Activated B cell treated with CpG ODN at 0.5 μM for 24 hours (primary cell): ENCODE measurements at regions of chr12 and their contacts with region 1.

Region 1: DNA sequence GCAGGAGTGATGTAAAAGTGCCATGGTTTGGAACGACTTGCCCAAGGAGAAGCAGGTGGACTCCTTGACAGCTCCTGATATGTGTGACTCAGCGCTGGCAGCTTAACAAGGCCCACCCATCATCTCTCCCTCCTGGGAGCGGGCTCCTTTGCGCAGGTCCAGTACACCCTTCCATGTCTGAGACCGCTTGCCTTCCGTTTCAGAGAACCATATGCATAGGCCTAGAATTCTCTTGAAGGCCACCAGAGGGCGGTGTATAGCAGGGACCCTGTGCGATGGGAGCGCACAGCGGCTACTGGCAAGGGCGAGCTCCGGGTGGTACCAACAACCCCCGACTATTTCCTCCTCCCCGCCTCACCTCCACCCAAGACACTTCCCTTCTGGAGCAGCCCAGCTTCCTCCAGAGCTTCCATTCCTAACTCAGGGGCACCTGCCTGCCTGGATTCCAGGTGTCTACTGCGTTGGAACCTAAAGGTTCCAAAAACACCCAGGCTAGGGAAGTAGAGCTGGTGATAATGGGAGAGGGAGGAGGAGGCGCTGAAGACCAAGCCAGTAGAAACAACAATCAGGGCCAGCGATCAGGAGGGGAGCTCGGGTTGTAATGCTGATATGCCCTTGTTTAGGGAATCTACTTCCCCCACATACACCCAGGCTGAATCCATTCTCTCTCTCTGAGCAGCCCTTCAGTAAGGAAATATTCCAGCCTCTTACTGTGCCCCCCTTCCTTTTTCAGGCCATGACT is 6.2 kb downstream of the DHH start:
- DNase-seq: peak; percentile 53
- ATAC-seq: peak; percentile 93
- H3K4me3 Mint-ChIP-seq: peak overlapping the region; percentile 64
- H3K27ac Mint-ChIP-seq: no peak overlapping the region
- H3K4me1 Mint-ChIP-seq: peaks cover 42% of the 10 kb centered on the region
- H3K27me3 Mint-ChIP-seq: peaks cover 45% of the 10 kb centered on the region
- CTCF ChIP-seq: peak; percentile 35

Region 2: DNA sequence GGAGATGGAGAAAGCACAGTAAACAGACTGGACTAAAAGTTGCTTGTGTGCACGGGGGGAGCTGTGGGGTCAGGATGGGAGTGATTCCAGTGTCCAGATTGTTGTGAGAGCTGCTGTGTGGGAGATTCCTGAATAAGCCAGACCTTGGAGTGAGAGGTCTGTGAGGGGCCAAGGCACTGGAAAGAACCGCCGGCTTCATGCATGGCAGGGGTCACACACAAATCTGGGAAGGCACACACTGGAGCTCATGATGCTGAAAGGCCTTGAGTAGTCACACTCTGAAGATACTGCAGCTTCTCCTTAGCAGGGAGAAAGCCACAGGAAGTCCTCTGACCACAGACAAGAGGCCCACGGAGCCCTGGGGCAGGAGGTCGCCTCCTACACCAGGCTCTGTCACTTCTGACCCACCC is 322.6 kb before region 1 on chr12:
- CTCF ChIA-PET with region 1: no interaction called
- POLR2A ChIA-PET with region 1: no interaction called
- intact Hi-C with region 1: no loop called
- DNase-seq: no peak
- ATAC-seq: no peak
- H3K4me3 Mint-ChIP-seq: no peak overlapping the region
- H3K27ac Mint-ChIP-seq: no peak overlapping the region
- H3K4me1 Mint-ChIP-seq: peaks cover 20% of the 10 kb centered on the region
- H3K27me3 Mint-ChIP-seq: peaks cover 10% of the 10 kb centered on the region
- CTCF ChIP-seq: no peak

Region 3: GRCh38 chr12:48977315-48978281 is 110.8 kb before region 1 on chr12:
- CTCF ChIA-PET with region 1: no interaction called
- POLR2A ChIA-PET with region 1: no interaction called
- intact Hi-C with region 1: loop called (anchors 5 kb)
- DNase-seq: peak; percentile 79
- ATAC-seq: peak; percentile 72
- H3K4me3 Mint-ChIP-seq: peak overlapping the region; percentile 68
- H3K27ac Mint-ChIP-seq: peak overlapping the region; percentile 64
- H3K4me1 Mint-ChIP-seq: peaks cover 42% of the 10 kb centered on the region
- H3K27me3 Mint-ChIP-seq: peaks cover 50% of the 10 kb centered on the region
- CTCF ChIP-seq: peak; percentile 45

Region 4: DNA sequence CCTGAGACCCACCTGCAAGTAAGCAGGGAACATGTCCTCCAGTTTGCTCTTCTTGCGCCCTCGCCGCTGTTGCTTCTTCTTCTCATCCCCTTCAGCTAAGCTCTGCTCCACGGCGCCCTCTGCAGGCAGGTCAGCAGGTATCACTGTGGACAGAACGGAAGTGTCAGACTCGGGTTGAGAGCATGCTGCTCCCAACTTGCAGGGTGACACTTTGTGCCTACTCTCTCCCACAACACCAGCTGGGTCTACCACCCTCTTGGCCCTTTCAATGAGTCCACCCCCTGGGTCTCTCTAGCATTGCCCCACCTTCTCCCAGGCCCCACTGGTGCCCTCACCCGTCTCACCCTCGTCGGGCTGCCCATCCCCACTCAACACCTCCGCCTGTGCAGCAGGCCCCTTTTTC is 44.5 kb before region 1 on chr12:
- CTCF ChIA-PET with region 1: no interaction called
- POLR2A ChIA-PET with region 1: no interaction called
- intact Hi-C with region 1: no loop called
- DNase-seq: peak; percentile 63
- ATAC-seq: peak; percentile 81
- H3K4me3 Mint-ChIP-seq: no peak overlapping the region
- H3K27ac Mint-ChIP-seq: no peak overlapping the region
- H3K4me1 Mint-ChIP-seq: no peaks in the 10 kb centered on the region
- H3K27me3 Mint-ChIP-seq: no peaks in the 10 kb centered on the region
- CTCF ChIP-seq: no peak

Region 5: GRCh38 chr12:49060237-49061156 is 27.9 kb before region 1 on chr12 and contains the start of gene KMT2D:
- CTCF ChIA-PET with region 1: interaction called, 79 read pairs
- POLR2A ChIA-PET with region 1: interaction called, 7 read pairs
- intact Hi-C with region 1: loop called (anchors 1 kb)
- DNase-seq: peak; percentile 83
- ATAC-seq: peak; percentile 67
- H3K4me3 Mint-ChIP-seq: peak within 1 kb of the TSS; percentile 97
- H3K27ac Mint-ChIP-seq: peak within 1 kb of the TSS; percentile 97
- H3K4me1 Mint-ChIP-seq: peaks cover 50% of the 10 kb centered on the region
- H3K27me3 Mint-ChIP-seq: no peaks in the 10 kb centered on the region
- CTCF ChIP-seq: no peak
- total RNA-seq, gene KMT2D: 127 and 136 TPM in 2 replicates

Region 6: DNA sequence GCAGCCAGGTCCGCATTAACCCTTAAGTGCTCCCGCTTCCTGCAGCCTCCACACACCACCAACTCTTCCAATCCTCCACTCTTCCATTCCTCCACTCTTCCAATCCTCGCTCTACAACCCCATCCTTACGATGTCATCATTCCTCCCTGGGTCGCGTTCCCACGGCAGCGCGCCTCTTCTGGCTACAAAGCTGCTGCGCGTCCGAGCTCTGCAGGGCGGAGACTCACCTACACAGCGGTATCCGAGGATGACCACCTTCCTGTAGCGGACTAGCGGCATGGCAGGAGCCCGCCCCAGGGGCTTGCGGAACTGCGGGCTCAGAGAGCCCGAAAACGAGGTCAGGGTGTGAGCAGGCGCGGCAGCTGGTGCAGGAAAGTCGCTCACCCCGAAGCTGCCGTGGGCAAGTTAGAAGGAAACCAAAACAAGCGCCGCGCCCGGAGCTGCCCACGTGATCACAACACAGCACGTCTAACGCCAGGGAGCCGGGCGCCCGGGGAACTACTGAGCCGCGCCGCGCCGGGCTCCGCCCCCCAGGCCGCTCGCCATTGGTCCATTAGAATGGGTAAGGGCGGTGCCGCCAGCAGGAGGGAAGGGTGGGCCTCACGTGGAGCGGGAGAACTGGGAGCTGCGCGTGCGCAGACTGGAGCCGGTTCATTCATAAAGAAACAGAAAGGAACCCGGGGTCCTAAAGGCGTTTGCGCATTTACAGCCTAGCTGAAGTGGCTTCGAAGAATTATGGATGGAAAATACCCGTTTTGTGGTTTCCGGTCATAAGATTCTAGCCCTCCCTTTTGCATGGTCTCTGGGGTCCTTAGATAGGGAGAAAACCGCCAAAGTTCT is 18.6 kb before region 1 on chr12 and contains the start of gene RHEBL1:
- CTCF ChIA-PET with region 1: interaction called, 79 read pairs
- POLR2A ChIA-PET with region 1: interaction called, 9 read pairs
- intact Hi-C with region 1: loop called (anchors 1 kb)
- DNase-seq: peak; percentile 98
- ATAC-seq: peak; percentile 100
- H3K4me3 Mint-ChIP-seq: peak within 1 kb of the TSS; percentile 99
- H3K27ac Mint-ChIP-seq: peak within 1 kb of the TSS; percentile 93
- H3K4me1 Mint-ChIP-seq: peaks cover 15% of the 10 kb centered on the region
- H3K27me3 Mint-ChIP-seq: no peaks in the 10 kb centered on the region
- CTCF ChIP-seq: no peak
- total RNA-seq, gene RHEBL1: 3.2 and 3.3 TPM in 2 replicates

Region 7: GRCh38 chr12:49105608-49106007 is 17.2 kb after region 1 on chr12:
- CTCF ChIA-PET with region 1: interaction called, 32 read pairs
- POLR2A ChIA-PET with region 1: interaction called, 8 read pairs
- intact Hi-C with region 1: loop called (anchors 1 kb)
- DNase-seq: no peak
- ATAC-seq: no peak
- H3K4me3 Mint-ChIP-seq: no peak overlapping the region
- H3K27ac Mint-ChIP-seq: no peak overlapping the region
- H3K4me1 Mint-ChIP-seq: peaks cover 39% of the 10 kb centered on the region
- H3K27me3 Mint-ChIP-seq: no peaks in the 10 kb centered on the region
- CTCF ChIP-seq: no peak

Region 8: DNA sequence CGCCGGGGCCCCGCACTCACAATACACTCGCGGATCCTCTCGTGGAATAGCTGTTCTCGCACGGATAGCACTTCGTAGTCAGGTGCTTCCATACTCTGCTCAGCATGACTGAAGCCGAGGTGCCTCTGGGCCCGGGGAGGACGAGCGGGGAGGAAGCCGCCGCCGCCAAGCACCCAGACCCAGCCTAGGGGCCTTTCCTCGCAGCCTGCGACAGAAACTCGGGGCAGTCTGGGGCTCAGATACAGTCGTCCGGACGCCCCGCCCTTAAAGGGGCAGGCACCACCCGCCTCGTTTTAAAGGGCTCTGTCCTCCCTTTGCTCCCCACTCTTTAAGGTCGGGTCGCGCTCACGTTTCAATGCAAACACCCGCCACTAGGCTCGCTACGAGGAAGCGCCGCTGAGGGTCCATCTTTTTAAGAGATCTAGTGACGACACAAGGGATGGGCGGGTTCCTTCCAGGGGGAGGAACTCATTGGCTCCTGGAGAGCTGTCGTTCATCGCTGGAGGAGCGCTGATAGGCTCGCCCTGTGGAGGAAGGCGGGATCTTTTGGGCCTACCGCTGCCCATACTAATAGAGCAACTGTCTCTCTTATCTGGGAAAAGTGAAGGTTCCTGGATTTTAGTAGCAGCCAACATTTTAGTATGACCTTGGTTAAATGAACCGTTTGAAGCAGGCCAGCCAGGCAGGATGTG is 22.2 kb after region 1 on chr12 and contains the start of gene LMBR1L:
- CTCF ChIA-PET with region 1: interaction called, 32 read pairs
- POLR2A ChIA-PET with region 1: interaction called, 8 read pairs
- intact Hi-C with region 1: loop called (anchors 1 kb)
- DNase-seq: peak; percentile 83
- ATAC-seq: peak; percentile 94
- H3K4me3 Mint-ChIP-seq: peak within 1 kb of the TSS; percentile 98
- H3K27ac Mint-ChIP-seq: peak within 1 kb of the TSS; percentile 96
- H3K4me1 Mint-ChIP-seq: peaks cover 46% of the 10 kb centered on the region
- H3K27me3 Mint-ChIP-seq: no peaks in the 10 kb centered on the region
- CTCF ChIP-seq: no peak
- total RNA-seq, gene LMBR1L: 64.2 and 79.9 TPM in 2 replicates

Region 9: GRCh38 chr12:49232940-49233841 is 144.8 kb after region 1 on chr12:
- CTCF ChIA-PET with region 1: interaction called, 43 read pairs
- POLR2A ChIA-PET with region 1: interaction called, 29 read pairs
- intact Hi-C with region 1: loop called (anchors 1 kb)
- DNase-seq: no peak
- ATAC-seq: no peak
- H3K4me3 Mint-ChIP-seq: peak overlapping the region; percentile 93
- H3K27ac Mint-ChIP-seq: peak overlapping the region; percentile 89
- H3K4me1 Mint-ChIP-seq: peaks cover 15% of the 10 kb centered on the region
- H3K27me3 Mint-ChIP-seq: no peaks in the 10 kb centered on the region
- CTCF ChIP-seq: no peak